ENCODE measurements at regions of chr5 and their contacts with region 1.

Region 1: GRCh38 chr5:37424441-37424840 is 45.3 kb downstream of the WDR70 start:
- DNase-seq: no peak
- ATAC-seq: no peak
- H3K4me3 Mint-ChIP-seq: no peak overlapping the region
- H3K27ac Mint-ChIP-seq: no peak overlapping the region
- H3K4me1 Mint-ChIP-seq: peaks cover 6% of the 10 kb centered on the region
- H3K27me3 Mint-ChIP-seq: no peaks in the 10 kb centered on the region

Region 2: DNA sequence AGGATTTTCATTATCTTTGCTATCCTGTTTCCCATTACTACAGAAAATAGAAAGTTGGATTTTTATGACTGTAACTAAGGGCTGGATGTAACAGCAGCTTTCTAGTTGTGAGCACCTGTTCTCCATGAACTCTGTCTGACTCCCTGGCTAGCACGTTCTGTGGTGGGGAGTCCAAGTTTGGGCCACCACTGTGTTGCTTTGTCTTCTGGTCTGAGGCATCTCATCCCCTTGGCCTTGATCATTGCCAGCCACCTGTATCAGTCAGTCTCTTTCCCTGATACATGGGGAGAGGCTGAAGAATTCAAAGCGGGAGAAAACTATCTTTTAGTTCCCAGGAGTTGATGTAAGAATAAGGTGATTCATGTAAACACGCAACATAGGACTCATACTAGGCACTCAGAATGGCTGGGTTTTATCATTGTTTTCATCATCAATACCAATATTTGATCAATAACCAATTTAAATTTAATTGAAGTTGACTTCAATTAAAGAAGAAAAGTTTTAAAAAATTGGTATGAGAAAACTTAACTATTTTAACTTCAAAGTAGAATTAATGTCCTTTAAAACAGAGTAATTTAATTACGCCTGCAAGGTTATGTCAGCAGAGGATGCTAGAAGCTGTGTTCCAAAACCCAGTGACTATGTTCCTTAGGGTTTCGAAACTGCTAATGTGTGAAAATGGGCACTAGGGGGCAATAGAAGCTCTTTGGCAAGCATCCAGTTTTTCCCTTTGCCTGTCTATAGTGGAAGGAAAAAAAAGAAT is 11.7 kb before region 1 on chr5:
- CTCF ChIA-PET with region 1: interaction called, 10 read pairs
- DNase-seq: peak; percentile 46
- ATAC-seq: peak; percentile 39
- H3K4me3 Mint-ChIP-seq: no peak overlapping the region
- H3K27ac Mint-ChIP-seq: no peak overlapping the region
- H3K4me1 Mint-ChIP-seq: no peaks in the 10 kb centered on the region
- H3K27me3 Mint-ChIP-seq: no peaks in the 10 kb centered on the region

Region 3: DNA sequence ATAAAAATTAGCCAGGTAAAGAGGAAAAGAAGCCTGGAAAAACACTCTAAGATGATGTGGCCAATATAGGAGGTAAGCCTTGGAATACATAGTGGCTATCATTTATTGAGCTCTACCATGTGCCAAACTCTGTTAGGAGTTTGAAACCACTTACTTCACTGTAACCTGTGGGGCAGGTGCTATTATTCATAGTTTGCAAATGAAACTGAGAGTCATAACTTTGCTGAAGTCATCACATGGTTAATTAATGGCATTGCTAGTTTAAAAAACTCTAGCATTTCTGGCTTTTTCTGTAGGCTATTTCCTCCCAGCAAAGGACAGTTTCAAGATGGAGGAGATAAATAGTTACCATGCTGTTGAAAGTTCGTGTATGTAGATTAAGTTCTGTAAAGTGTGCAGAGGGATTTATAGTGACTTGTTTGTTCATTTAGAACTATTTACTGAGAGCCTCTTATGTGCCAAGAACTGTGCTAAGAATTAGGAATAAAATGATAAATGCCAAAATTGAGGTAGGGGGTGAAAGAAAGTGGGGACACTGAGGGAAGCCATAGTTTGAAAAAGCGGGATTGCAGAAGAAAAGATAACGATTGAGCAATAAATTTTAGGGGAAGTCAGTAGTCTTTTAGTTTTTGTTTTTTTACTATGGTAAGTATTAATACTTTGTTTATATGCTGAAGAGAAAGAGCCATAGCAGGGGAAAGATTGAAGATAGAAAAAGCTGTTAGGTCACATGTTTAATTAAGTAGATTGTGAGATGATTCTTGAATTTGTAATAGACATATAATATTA is 11.9 kb after region 1 on chr5:
- CTCF ChIA-PET with region 1: no interaction called
- DNase-seq: no peak
- ATAC-seq: no peak
- H3K4me3 Mint-ChIP-seq: no peak overlapping the region
- H3K27ac Mint-ChIP-seq: no peak overlapping the region
- H3K4me1 Mint-ChIP-seq: no peaks in the 10 kb centered on the region
- H3K27me3 Mint-ChIP-seq: no peaks in the 10 kb centered on the region

Measured in activated CD8-positive, alpha-beta memory T cell treated with anti-CD3 and anti-CD28 coated beads, Interleukin-2, amount 10 ng/mL, durations not matched to agents 7 days and 5 days (primary cell).